Activated naive CD4-positive, alpha-beta T cell treated with anti-CD3 and anti-CD28 coated beads for 36 hours (primary cell): ENCODE measurements at regions of chr11 and their contacts with region 1.

Region 1: GRCh38 chr11:85752890-85753581 is 57.9 kb downstream of the SYTL2 start:
- DNase-seq: peak; percentile 94
- H3K4me3 Mint-ChIP-seq: peak overlapping the region; percentile 57
- H3K27ac Mint-ChIP-seq: peak overlapping the region; percentile 97
- H3K4me1 Mint-ChIP-seq: peaks cover 95% of the 10 kb centered on the region
- H3K27me3 Mint-ChIP-seq: no peaks in the 10 kb centered on the region

Region 2: GRCh38 chr11:85495918-85496317 is 257.1 kb before region 1 on chr11:
- CTCF ChIA-PET with region 1: no interaction called
- intact Hi-C with region 1: no loop called
- DNase-seq: no peak
- H3K4me3 Mint-ChIP-seq: no peak overlapping the region
- H3K27ac Mint-ChIP-seq: no peak overlapping the region
- H3K4me1 Mint-ChIP-seq: no peaks in the 10 kb centered on the region
- H3K27me3 Mint-ChIP-seq: no peaks in the 10 kb centered on the region

Region 3: GRCh38 chr11:85699957-85700741 is 52.9 kb before region 1 on chr11:
- CTCF ChIA-PET with region 1: interaction called, 5 read pairs
- intact Hi-C with region 1: loop called (anchors 1 kb)
- DNase-seq: no peak
- H3K4me3 Mint-ChIP-seq: no peak overlapping the region
- H3K27ac Mint-ChIP-seq: peak overlapping the region; percentile 36
- H3K4me1 Mint-ChIP-seq: peaks cover 35% of the 10 kb centered on the region
- H3K27me3 Mint-ChIP-seq: no peaks in the 10 kb centered on the region

Region 4: DNA sequence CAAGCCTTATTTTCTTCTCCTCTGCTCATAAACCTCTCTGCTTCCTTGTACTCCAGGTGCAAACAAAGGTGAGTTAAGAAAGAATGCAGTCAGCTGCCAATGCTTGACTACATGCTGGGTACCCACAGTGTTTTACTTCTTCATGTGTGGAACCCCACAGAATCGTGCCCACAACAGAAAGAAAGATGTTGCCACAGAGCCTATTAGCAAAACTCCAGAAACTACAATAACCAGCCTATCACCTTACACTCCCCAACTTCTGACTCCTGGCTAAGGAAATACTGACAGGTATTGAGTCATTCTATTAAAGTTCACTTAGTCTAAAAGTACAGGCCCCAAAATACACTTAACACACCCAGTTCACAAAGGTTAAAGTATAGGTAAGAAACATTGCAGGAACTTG is 10.2 kb before region 1 on chr11:
- CTCF ChIA-PET with region 1: interaction called, 4 read pairs
- intact Hi-C with region 1: loop called (anchors 1 kb)
- DNase-seq: no peak
- H3K4me3 Mint-ChIP-seq: no peak overlapping the region
- H3K27ac Mint-ChIP-seq: peak overlapping the region; percentile 70
- H3K4me1 Mint-ChIP-seq: peaks cover 55% of the 10 kb centered on the region
- H3K27me3 Mint-ChIP-seq: no peaks in the 10 kb centered on the region

Region 5: DNA sequence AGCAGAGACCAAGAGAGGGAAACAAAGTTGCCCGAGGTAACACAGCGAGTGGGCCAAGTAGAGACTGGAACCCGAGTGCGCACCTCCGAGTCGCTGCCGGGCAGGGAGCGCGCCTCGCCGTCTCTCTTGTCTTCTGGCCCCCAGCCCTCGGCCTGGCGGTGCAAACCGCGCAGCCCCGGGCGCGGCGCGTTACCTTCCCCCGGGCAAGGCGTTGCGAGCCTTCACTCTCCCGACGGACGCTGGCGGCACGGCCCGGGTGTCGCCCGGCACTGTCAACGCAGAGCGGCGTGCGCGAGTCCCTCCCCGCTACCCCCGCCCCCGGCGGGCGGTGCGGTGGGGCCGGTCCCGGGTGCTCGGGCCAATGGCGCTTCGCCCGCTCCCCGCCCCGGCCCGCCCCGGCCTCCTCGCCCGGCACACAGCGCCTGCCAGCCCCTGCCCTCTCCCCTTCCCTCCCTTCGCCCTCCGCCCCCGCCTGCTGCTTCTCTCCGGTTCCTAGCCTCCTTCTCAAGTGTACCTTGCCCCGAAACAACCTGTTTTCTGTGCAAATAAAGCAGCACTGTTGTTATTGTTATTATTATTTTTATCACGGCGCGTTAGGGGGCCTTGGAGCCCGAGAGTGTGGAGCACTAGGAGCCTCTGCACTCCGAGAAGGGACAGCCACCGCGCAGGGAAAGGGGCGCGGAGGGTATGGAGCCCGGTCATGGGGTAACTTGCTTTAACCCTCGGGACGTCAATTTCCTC is 58.0 kb after region 1 on chr11 and contains the start of gene SYTL2:
- CTCF ChIA-PET with region 1: interaction called, 3 read pairs
- intact Hi-C with region 1: loop called (anchors 1 kb)
- DNase-seq: peak; percentile 77
- H3K4me3 Mint-ChIP-seq: peak within 1 kb of the TSS; percentile 81
- H3K27ac Mint-ChIP-seq: no peak within 1 kb of the TSS
- H3K4me1 Mint-ChIP-seq: peaks cover 33% of the 10 kb centered on the region
- H3K27me3 Mint-ChIP-seq: no peaks in the 10 kb centered on the region
- total RNA-seq, gene SYTL2: 13.8 to 13.9 TPM

Region 6: DNA sequence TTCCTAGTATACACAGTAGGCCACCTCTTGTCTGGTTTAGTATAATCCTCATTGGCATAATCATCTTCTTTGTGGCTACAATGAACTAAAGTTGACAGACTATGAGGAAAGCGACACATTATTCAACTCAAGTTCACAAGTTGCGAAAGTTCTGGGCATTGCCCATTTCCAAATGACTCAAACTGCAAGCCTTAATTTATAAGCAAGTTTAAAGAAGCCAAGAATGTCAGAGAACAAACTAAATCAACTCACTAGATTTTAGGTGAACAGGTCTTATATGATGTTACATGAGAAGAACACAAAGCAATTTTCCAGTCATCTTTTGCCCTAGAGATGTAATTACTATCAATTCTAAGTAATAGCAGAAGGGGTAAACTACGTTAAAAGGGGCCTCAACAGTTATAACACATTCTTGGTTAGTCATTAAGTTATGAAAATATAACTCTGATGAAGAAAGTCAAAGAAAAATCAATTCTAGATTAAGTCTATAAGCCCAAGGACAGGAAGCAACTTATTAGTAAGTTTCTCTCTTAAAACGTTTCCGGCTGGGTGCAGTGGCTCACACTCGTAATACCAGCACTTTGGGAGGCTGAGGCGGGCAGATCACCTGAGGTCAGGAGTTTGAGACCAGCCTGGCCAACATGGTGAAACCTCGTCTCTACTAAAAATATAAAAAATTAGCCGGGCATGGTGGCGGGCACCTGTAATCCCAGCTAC is 294.4 kb after region 1 on chr11:
- CTCF ChIA-PET with region 1: no interaction called
- intact Hi-C with region 1: loop called (anchors 1 kb)
- DNase-seq: peak; percentile 69
- H3K4me3 Mint-ChIP-seq: peak overlapping the region; percentile 43
- H3K27ac Mint-ChIP-seq: peak overlapping the region; percentile 93
- H3K4me1 Mint-ChIP-seq: peaks cover 92% of the 10 kb centered on the region
- H3K27me3 Mint-ChIP-seq: no peaks in the 10 kb centered on the region

Region 7: DNA sequence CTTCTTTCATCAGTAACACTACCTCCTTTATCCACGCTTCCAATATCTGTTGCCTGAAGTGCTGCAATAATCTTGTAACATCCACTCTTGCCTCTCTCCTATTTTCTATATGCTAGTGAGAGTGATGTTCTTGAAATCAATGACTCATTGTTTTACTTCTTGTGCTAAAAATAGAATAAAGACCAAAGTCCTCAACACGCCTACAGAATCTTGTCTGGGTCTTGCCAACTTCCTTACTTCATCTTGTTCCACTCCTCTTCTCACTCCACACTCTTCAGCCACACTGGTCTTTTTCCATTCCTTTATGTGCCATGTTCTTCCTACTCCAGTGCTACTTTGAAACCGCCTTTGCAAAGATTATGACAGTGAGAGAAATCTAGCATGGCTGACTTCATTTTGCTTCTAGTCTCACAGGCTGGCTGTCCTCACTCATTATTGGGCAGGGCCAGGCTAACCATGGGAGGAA is 758.1 kb after region 1 on chr11:
- CTCF ChIA-PET with region 1: no interaction called
- intact Hi-C with region 1: loop called (anchors 5 kb)
- DNase-seq: peak; percentile 10
- H3K4me3 Mint-ChIP-seq: no peak overlapping the region
- H3K27ac Mint-ChIP-seq: no peak overlapping the region
- H3K4me1 Mint-ChIP-seq: peaks cover 8% of the 10 kb centered on the region
- H3K27me3 Mint-ChIP-seq: no peaks in the 10 kb centered on the region